ENCODE measurements at regions of chr5 and their contacts with region 1.

Region 1: DNA sequence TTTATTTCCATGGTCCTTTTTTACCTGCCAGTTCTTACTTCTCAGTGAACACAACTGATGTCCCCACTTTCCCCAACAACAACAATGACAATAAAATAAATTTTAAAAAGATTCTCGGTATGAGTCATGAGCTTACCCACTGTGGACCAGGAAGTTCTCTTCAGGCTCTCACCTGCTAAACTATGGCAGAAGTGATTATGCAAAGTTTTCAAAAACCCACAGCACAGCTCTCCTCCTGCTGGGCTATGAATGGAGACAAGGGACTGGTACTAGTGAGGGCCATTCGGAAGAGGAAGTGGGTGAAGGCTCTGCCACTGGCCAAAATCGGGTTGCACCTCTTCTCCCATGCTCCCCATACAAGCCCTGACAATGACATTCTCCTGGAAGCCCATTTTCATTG is 429.4 kb downstream of the PIK3R1 start:
- DNase-seq: no peak
- H3K4me3 ChIP-seq: no peak overlapping the region
- H3K27ac ChIP-seq: no peak overlapping the region
- H3K4me1 ChIP-seq: peaks cover 0 to 2% (median 0%) of the 10 kb centered on the region in 4 experiments; a peak in 1 of 7 replicates
- H3K27me3 ChIP-seq: no peaks in the 10 kb centered on the region
- CTCF ChIP-seq: no peak
- EP300 ChIP-seq: no peak
- POLR2A ChIP-seq: no peak
- RAD21 ChIP-seq: no peak

Region 2: GRCh38 chr5:68433923-68434879 is 210.8 kb before region 1 on chr5:
- CTCF ChIA-PET with region 1: no interaction called
- POLR2A ChIA-PET with region 1: no interaction called
- DNase-seq: peak in 1 of 2 experiments; percentile 23
- H3K4me3 ChIP-seq: no peak overlapping the region
- H3K27ac ChIP-seq: no peak overlapping the region
- H3K4me1 ChIP-seq: no peaks in the 10 kb centered on the region
- H3K27me3 ChIP-seq: no peaks in the 10 kb centered on the region
- CTCF ChIP-seq: no peak
- EP300 ChIP-seq: no peak
- POLR2A ChIP-seq: no peak
- RAD21 ChIP-seq: no peak

Region 3: DNA sequence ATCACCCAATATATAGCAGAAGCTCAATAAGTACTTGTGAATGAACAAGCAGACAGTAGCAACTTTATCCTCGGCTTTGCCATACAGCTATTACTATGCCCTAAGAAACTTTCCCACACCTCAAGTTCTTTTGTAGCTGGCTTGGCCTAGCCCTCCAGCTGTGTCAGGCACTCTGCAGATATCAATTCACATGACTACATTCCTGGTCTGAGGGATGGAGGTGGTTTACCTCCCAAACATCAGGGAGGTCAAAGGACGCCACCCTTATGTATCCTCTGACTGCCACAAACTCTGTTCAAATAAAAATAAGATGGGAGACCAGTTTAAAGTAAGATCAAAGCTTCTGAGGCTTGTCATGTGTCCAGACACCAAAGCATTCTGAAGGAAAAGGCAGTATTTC is 13.1 kb before region 1 on chr5:
- CTCF ChIA-PET with region 1: interaction called, 10 read pairs
- POLR2A ChIA-PET with region 1: no interaction called
- DNase-seq: no peak
- H3K4me3 ChIP-seq: no peak overlapping the region
- H3K27ac ChIP-seq: no peak overlapping the region
- H3K4me1 ChIP-seq: peaks cover 0 to 8% (median 0%) of the 10 kb centered on the region in 4 experiments; a peak in 1 of 7 replicates
- H3K27me3 ChIP-seq: no peaks in the 10 kb centered on the region
- CTCF ChIP-seq: no peak
- EP300 ChIP-seq: no peak
- POLR2A ChIP-seq: no peak
- RAD21 ChIP-seq: no peak

Measured in H1 (cell line).